ENCODE measurements at regions of chr6 and their contacts with region 1.

Region 1: DNA sequence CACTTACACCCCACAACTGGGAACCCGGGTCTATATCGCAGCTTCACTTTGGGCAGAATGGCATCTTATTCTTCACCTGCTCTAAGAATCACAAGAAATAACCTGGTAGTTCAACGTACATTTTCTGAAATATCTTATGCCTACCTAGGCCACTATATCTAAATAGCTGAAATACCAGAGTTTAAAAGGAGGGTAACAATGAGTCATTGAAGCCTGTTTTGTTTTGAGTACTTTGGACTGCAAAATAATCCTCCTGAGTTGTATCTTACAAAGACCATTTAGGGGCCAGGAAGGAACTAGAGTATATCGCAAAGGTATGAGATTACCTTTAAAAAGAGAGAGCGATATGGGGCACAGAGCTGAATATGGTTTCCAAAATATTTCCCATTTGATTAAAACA is 96.7 kb upstream of the NUP153 start:
- DNase-seq: no peak
- ATAC-seq: no peak
- H3K4me3 ChIP-seq: no peak overlapping the region
- H3K4me3 Mint-ChIP-seq: no peak overlapping the region
- H3K27ac ChIP-seq: no peak overlapping the region
- H3K27ac Mint-ChIP-seq: no peak overlapping the region
- H3K4me1 ChIP-seq: no peaks in the 10 kb centered on the region
- H3K4me1 Mint-ChIP-seq: peaks cover 3% of the 10 kb centered on the region
- H3K27me3 ChIP-seq: no peaks in the 10 kb centered on the region
- H3K27me3 Mint-ChIP-seq: peaks cover 12% of the 10 kb centered on the region
- CTCF ChIP-seq: no peak

Region 2: GRCh38 chr6:17565399-17565798 is 238.0 kb before region 1 on chr6:
- CTCF ChIA-PET with region 1: no interaction called
- POLR2A ChIA-PET with region 1: no interaction called
- intact Hi-C with region 1: no loop called
- DNase-seq: no peak
- ATAC-seq: no peak
- H3K4me3 ChIP-seq: no peak overlapping the region
- H3K4me3 Mint-ChIP-seq: no peak overlapping the region
- H3K27ac ChIP-seq: no peak overlapping the region
- H3K27ac Mint-ChIP-seq: no peak overlapping the region
- H3K4me1 ChIP-seq: no peaks in the 10 kb centered on the region
- H3K4me1 Mint-ChIP-seq: no peaks in the 10 kb centered on the region
- H3K27me3 ChIP-seq: no peaks in the 10 kb centered on the region
- H3K27me3 Mint-ChIP-seq: peaks cover 6% of the 10 kb centered on the region
- CTCF ChIP-seq: no peak

Region 3: DNA sequence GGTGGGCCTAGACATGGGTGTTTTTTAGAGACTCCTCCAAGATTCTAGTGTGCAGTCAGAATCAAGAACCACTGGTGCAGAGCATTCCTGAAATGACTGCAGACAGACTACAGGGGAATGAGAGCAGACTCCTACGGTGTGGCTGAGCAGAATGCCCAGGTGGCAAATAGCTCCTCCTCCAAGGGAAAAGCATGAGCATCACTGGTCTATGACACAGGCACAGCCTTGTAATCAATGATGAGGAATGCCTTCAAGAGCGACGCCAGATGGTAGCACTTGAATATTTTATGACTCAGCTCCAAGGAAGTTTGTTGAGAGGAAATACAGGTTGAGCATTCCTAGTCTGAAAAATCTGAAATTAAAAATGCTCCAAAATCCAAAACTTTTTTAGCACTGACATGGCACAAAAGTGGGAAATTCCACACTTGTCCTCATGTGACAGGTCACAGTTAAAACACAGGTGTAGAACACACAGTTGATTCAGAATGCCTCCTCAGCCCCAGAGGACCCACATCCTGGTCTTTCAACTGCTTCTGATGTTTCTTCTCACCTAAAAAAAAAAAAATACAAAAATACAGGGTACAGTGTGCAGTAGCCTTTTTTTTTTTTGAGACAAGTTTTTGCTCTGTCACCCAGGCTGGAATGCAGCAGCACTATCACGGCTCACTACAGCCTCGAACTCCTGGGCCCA is 213.9 kb before region 1 on chr6:
- CTCF ChIA-PET with region 1: interaction called, 43 read pairs
- POLR2A ChIA-PET with region 1: no interaction called
- intact Hi-C with region 1: loop called (anchors 1 kb)
- DNase-seq: peak in 4 of 9 experiments; percentile 13 to 77 (median 54)
- ATAC-seq: peak; percentile 93
- H3K4me3 ChIP-seq: no peak overlapping the region
- H3K4me3 Mint-ChIP-seq: no peak overlapping the region
- H3K27ac ChIP-seq: no peak overlapping the region
- H3K27ac Mint-ChIP-seq: peak overlapping the region; percentile 73
- H3K4me1 ChIP-seq: peaks cover 18% of the 10 kb centered on the region
- H3K4me1 Mint-ChIP-seq: peaks cover 19% of the 10 kb centered on the region
- H3K27me3 ChIP-seq: no peaks in the 10 kb centered on the region
- H3K27me3 Mint-ChIP-seq: no peaks in the 10 kb centered on the region
- CTCF ChIP-seq: no peak

Region 4: DNA sequence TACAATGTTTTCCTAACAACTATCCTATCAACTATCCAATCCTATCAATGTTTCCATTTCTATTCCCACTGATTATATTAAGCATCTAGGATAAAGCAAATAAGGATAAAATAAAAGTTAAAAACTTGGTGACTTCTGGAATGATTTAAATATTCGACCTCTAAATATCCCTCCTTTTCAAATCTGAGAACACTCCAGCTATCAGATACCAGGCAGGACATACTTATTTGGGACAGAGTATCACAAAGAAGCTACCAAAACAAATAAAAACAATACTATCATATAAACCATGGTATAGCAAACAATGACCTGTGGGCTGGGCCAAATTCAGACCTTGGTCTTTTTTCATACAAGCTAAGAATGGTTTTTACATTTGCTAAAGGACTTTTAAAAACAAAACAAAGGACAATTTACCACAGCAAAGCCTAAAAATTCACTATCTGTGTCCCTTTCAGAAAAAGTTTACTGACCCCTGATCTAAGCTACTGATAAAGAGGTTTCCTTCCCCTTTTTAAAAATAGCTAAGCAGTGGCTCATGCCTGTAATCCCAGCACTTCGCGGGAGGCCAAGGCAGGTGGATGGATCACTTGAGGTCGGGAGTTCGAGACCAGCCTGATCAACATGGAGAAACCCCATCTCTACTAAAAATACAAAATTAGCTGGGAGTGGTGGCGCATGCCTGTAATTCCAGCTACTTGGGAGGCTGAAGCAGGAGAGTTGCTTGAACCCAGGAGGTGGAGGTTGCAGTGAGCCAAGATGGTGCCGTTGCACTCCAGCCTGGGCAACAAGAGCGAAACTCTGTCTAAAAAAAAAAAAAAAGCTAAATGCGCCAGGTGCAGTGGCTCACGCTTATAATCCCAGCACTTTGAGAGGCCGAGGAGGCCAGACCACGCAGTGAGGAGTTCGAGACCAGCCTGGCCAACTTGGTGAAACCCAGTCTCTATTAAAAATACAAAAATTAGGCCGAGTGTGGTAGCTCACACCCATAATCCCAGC is 102.7 kb before region 1 on chr6:
- CTCF ChIA-PET with region 1: interaction called, 18 read pairs
- POLR2A ChIA-PET with region 1: no interaction called
- intact Hi-C with region 1: loop called (anchors 2 to 5 kb)
- DNase-seq: no peak
- ATAC-seq: no peak
- H3K4me3 ChIP-seq: no peak overlapping the region
- H3K4me3 Mint-ChIP-seq: no peak overlapping the region
- H3K27ac ChIP-seq: peak overlapping the region in 1 of 2 experiments; percentile 3
- H3K27ac Mint-ChIP-seq: peak overlapping the region; percentile 74
- H3K4me1 ChIP-seq: peaks cover 34% of the 10 kb centered on the region
- H3K4me1 Mint-ChIP-seq: peaks cover 62% of the 10 kb centered on the region
- H3K27me3 ChIP-seq: no peaks in the 10 kb centered on the region
- H3K27me3 Mint-ChIP-seq: no peaks in the 10 kb centered on the region
- CTCF ChIP-seq: no peak

Region 5: DNA sequence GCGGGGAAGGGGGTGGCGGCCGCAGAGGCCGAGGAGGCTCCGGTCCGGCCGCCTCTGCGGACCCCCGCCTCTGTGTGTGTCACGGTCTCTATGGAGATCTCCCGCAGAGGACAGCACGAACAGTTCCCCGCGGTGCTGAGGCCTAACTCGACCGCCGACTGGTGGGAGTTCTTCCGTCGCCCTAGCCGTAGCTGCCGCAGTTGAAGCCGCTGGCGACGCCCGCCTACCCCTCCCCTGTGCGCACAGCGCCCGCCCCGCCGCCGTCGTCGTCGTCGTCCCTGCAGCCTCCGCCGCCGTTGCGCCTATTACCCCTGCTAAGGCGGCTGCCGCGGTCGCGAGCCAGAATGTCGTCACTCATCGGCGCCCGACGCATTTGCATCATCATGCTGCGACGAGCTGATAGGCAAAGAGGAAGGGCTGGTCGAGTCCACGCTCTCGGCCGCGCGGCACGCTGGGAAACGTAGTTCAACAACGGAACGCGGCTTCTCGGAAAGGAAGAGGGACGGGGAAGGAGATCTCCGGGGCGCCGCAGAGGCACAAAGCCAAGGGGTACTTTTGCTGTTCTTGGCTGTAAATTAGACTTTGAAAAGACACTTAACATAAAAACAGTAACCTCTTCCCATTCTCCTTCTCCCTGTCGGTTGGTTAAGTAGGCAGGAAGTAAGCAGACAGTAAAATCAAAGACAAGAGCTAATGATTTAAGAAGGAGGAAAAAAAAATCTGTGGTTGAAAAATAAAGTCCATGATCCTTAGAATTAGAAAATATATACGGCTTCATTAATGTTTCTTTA is 96.6 kb before region 1 on chr6 and contains the start of gene NUP153:
- CTCF ChIA-PET with region 1: interaction called, 18 read pairs
- POLR2A ChIA-PET with region 1: no interaction called
- intact Hi-C with region 1: loop called (anchors 2 to 5 kb)
- DNase-seq: peak; percentile 98 to 100 (median 100)
- ATAC-seq: peak; percentile 77
- H3K4me3 ChIP-seq: peak within 1 kb of the TSS; percentile 84 to 96
- H3K4me3 Mint-ChIP-seq: peak within 1 kb of the TSS; percentile 88
- H3K27ac ChIP-seq: peak within 1 kb of the TSS; percentile 99
- H3K27ac Mint-ChIP-seq: peak within 1 kb of the TSS; percentile 96
- H3K4me1 ChIP-seq: peaks cover 39% of the 10 kb centered on the region
- H3K4me1 Mint-ChIP-seq: peaks cover 40% of the 10 kb centered on the region
- H3K27me3 ChIP-seq: no peaks in the 10 kb centered on the region
- H3K27me3 Mint-ChIP-seq: no peaks in the 10 kb centered on the region
- CTCF ChIP-seq: no peak
- total RNA-seq, gene NUP153: 76.4 to 77.7 TPM

Region 6: GRCh38 chr6:17741507-17741906 is 61.9 kb before region 1 on chr6:
- CTCF ChIA-PET with region 1: no interaction called
- POLR2A ChIA-PET with region 1: no interaction called
- intact Hi-C with region 1: no loop called
- DNase-seq: no peak
- ATAC-seq: no peak
- H3K4me3 ChIP-seq: no peak overlapping the region
- H3K4me3 Mint-ChIP-seq: no peak overlapping the region
- H3K27ac ChIP-seq: no peak overlapping the region
- H3K27ac Mint-ChIP-seq: no peak overlapping the region
- H3K4me1 ChIP-seq: no peaks in the 10 kb centered on the region
- H3K4me1 Mint-ChIP-seq: no peaks in the 10 kb centered on the region
- H3K27me3 ChIP-seq: no peaks in the 10 kb centered on the region
- H3K27me3 Mint-ChIP-seq: no peaks in the 10 kb centered on the region
- CTCF ChIP-seq: no peak

Region 7: GRCh38 chr6:17790489-17790888 is 12.9 kb before region 1 on chr6:
- CTCF ChIA-PET with region 1: interaction called, 27 read pairs
- POLR2A ChIA-PET with region 1: no interaction called
- intact Hi-C with region 1: no loop called
- DNase-seq: no peak
- ATAC-seq: no peak
- H3K4me3 ChIP-seq: no peak overlapping the region
- H3K4me3 Mint-ChIP-seq: no peak overlapping the region
- H3K27ac ChIP-seq: no peak overlapping the region
- H3K27ac Mint-ChIP-seq: no peak overlapping the region
- H3K4me1 ChIP-seq: no peaks in the 10 kb centered on the region
- H3K4me1 Mint-ChIP-seq: no peaks in the 10 kb centered on the region
- H3K27me3 ChIP-seq: peaks cover 0 to 2% of the 10 kb centered on the region in 2 experiments
- H3K27me3 Mint-ChIP-seq: peaks cover 3% of the 10 kb centered on the region
- CTCF ChIP-seq: no peak

Region 8: DNA sequence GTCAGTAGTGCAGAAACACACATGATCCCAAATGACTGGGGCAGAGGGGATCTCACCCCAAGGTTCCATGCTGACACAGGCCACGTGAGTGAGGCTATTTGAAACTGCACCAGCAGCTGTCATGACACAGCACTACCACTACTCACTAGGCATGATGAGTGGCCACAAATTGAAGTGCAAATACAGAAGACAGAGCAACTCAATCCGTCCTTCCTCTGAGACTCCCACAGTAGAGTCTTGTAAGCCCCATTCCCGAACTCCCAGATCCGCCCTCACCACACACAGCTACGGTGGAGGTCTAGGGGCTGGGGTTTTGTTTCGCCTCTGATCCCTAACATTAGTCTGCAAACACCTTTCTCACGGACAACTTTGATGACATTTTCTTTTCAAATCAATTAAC is 16.6 kb after region 1 on chr6:
- CTCF ChIA-PET with region 1: interaction called, 54 read pairs
- POLR2A ChIA-PET with region 1: no interaction called
- intact Hi-C with region 1: no loop called
- DNase-seq: no peak
- ATAC-seq: no peak
- H3K4me3 ChIP-seq: no peak overlapping the region
- H3K4me3 Mint-ChIP-seq: no peak overlapping the region
- H3K27ac ChIP-seq: no peak overlapping the region
- H3K27ac Mint-ChIP-seq: no peak overlapping the region
- H3K4me1 ChIP-seq: no peaks in the 10 kb centered on the region
- H3K4me1 Mint-ChIP-seq: no peaks in the 10 kb centered on the region
- H3K27me3 ChIP-seq: peaks cover 0 to 3% of the 10 kb centered on the region in 2 experiments
- H3K27me3 Mint-ChIP-seq: peaks cover 10% of the 10 kb centered on the region
- CTCF ChIP-seq: no peak